ENCODE measurements at regions of chr16 and their contacts with region 1.

Region 1: DNA sequence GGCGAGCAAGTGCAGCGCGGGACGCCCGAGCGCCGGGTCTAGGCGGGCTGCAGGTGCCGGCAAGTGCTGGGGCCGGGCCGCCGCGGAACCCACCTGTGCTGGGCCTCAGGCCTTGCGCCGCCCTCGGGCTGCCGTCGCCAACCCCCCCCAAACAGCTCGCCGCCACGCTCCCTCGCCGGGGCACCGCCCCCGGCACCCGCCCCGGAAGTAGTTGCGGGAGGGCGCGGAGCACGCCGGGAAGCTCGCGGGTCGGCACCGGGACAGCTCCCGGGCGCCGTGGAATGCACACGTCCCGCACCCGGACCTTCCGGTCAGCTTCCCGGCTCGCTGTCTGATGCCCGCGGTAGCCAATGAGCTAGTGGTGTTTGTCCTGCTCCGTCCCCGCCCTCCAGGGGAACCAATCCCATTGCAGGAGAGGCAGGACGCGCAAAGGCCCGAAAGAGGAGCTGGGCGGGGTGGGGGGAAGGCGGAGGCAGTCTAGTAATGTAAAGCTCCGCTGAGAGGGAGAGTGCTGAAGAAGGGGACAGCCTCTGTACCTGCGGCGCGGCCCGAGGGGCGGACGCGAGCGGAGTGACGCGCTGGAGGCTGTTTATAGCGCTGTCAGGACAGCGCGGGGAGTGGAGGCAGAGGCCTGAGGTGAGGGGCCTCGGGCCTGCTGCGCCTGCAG is at the starts of genes ANKS3 and DNAAF8:
- DNase-seq: peak; percentile 87 to 89
- H3K4me3 ChIP-seq: peak within 1 kb of the TSS; percentile 59 to 97 (median 92)
- H3K27ac ChIP-seq: peak within 1 kb of the TSS; percentile 59; the same call in 1 of the 2 replicates
- H3K4me1 ChIP-seq: peaks cover 0 to 4% (median 0%) of the 10 kb centered on the region in 4 experiments; a peak in 2 of 7 replicates
- H3K27me3 ChIP-seq: peaks cover 0 to 4% (median under 1%) of the 10 kb centered on the region in 4 experiments; a peak in 2 of 7 replicates
- CTCF ChIP-seq: no peak
- EP300 ChIP-seq: peak; percentile 14 to 34; a peak in 2 of 3 replicates
- POLR2A ChIP-seq: peak in 1 of 2 experiments; percentile 42; a peak in 2 of 3 replicates
- RAD21 ChIP-seq: no peak
- total RNA-seq, gene ANKS3: 23.9 and 27.5 TPM in 2 replicates
- total RNA-seq, gene DNAAF8: 0.17 TPM in 1 of 2 replicates, not detected in the other

Region 2: DNA sequence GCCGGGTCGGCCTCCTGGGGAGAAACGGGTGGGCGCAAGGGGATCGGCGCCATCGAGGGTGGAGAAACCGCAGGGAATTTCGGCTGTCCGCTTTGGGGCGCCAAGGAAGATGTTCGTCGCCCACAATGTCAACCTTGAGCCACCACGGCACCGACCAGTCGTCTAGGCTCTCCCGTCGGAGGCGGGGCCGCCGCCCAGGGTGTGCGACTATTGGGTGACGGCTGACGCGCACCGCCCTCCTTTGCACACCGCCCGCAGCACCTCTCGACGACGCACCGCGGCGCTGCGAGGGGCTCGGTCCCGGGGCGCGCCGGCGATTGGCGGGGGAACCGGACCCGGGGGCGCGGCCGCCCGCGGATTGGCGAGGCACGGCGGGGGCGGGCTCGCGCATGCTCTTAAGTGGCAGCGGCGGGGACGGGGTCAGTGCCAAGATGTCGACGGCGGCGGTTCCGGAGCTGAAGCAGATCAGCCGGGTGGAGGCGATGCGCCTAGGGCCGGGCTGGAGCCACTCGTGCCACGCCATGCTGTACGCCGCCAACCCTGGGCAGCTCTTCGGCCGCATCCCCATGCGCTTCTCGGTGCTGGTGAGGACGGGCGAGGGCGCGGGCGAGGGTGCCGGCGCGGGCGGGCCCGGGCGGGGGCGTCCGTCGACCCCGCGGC is 40.8 kb before region 1 on chr16 and contains the start of gene NUDT16L1:
- CTCF ChIA-PET with region 1: interaction called, 3 read pairs
- POLR2A ChIA-PET with region 1: interaction called, 10 read pairs
- DNase-seq: peak; percentile 81 to 96
- H3K4me3 ChIP-seq: peak within 1 kb of the TSS; percentile 72 to 93 (median 76)
- H3K27ac ChIP-seq: peak within 1 kb of the TSS; percentile 50; the same call in 1 of the 2 replicates
- H3K4me1 ChIP-seq: peaks cover 0 to 7% (median 5%) of the 10 kb centered on the region in 4 experiments; a peak in 4 of 7 replicates
- H3K27me3 ChIP-seq: no peaks in the 10 kb centered on the region
- CTCF ChIP-seq: peak in 2 of 3 experiments; percentile 23 to 24; a peak in 2 of 4 replicates
- EP300 ChIP-seq: no peak
- POLR2A ChIP-seq: peak in 1 of 2 experiments; percentile 80; a peak in 2 of 3 replicates
- RAD21 ChIP-seq: no peak; a peak in 1 of 4 replicates
- total RNA-seq, gene NUDT16L1: 34.8 and 41.3 TPM in 2 replicates

Region 3: GRCh38 chr16:4713663-4714501 is 20.3 kb before region 1 on chr16:
- CTCF ChIA-PET with region 1: interaction called, 9 read pairs
- POLR2A ChIA-PET with region 1: interaction called, 11 read pairs
- DNase-seq: no peak
- H3K4me3 ChIP-seq: peak overlapping the region in 2 of 4 experiments; percentile 11 to 19; a peak in 3 of 8 replicates
- H3K27ac ChIP-seq: no peak overlapping the region
- H3K4me1 ChIP-seq: peaks cover under 1 to 16% (median 8%) of the 10 kb centered on the region in 4 experiments
- H3K27me3 ChIP-seq: no peaks in the 10 kb centered on the region
- CTCF ChIP-seq: no peak
- EP300 ChIP-seq: no peak
- POLR2A ChIP-seq: no peak
- RAD21 ChIP-seq: no peak

Region 4: GRCh38 chr16:4746991-4747574 is 12.9 kb after region 1 on chr16:
- CTCF ChIA-PET with region 1: interaction called, 6 read pairs
- POLR2A ChIA-PET with region 1: interaction called, 30 read pairs
- DNase-seq: no peak
- H3K4me3 ChIP-seq: no peak overlapping the region
- H3K27ac ChIP-seq: no peak overlapping the region
- H3K4me1 ChIP-seq: peaks cover 4 to 9% (median 6%) of the 10 kb centered on the region in 4 experiments
- H3K27me3 ChIP-seq: no peaks in the 10 kb centered on the region
- CTCF ChIP-seq: no peak
- EP300 ChIP-seq: no peak
- POLR2A ChIP-seq: no peak
- RAD21 ChIP-seq: no peak

Region 5: GRCh38 chr16:4802659-4803287 is 68.6 kb after region 1 on chr16:
- CTCF ChIA-PET with region 1: no interaction called
- POLR2A ChIA-PET with region 1: interaction called, 17 read pairs
- DNase-seq: peak; percentile 66 to 97
- H3K4me3 ChIP-seq: peak overlapping the region; percentile 63 to 82 (median 78)
- H3K27ac ChIP-seq: peak overlapping the region; percentile 70
- H3K4me1 ChIP-seq: peaks cover 0 to 14% (median 8%) of the 10 kb centered on the region in 4 experiments; a peak in 4 of 7 replicates
- H3K27me3 ChIP-seq: no peaks in the 10 kb centered on the region
- CTCF ChIP-seq: no peak
- EP300 ChIP-seq: no peak
- POLR2A ChIP-seq: peak in 1 of 2 experiments; percentile 61; a peak in 1 of 3 replicates
- RAD21 ChIP-seq: no peak

Region 6: GRCh38 chr16:4846891-4847773 is 112.9 kb after region 1 on chr16 and contains the starts of genes GLYR1 and UBN1:
- CTCF ChIA-PET with region 1: no interaction called
- POLR2A ChIA-PET with region 1: interaction called, 12 read pairs
- DNase-seq: peak; percentile 85 to 100
- H3K4me3 ChIP-seq: peak within 1 kb of the TSS; percentile 88 to 95 (median 90)
- H3K27ac ChIP-seq: peak within 1 kb of the TSS; percentile 87
- H3K4me1 ChIP-seq: peaks cover 3 to 11% (median 5%) of the 10 kb centered on the region in 4 experiments; a peak in 6 of 7 replicates
- H3K27me3 ChIP-seq: no peaks in the 10 kb centered on the region
- CTCF ChIP-seq: no peak
- EP300 ChIP-seq: no peak
- POLR2A ChIP-seq: peak; percentile 81 to 84
- RAD21 ChIP-seq: no peak
- total RNA-seq, gene GLYR1: 115 and 120 TPM in 2 replicates
- total RNA-seq, gene UBN1: 37.0 and 37.6 TPM in 2 replicates